ENCODE measurements at regions of chr3 and their contacts with region 1.

Region 1: DNA sequence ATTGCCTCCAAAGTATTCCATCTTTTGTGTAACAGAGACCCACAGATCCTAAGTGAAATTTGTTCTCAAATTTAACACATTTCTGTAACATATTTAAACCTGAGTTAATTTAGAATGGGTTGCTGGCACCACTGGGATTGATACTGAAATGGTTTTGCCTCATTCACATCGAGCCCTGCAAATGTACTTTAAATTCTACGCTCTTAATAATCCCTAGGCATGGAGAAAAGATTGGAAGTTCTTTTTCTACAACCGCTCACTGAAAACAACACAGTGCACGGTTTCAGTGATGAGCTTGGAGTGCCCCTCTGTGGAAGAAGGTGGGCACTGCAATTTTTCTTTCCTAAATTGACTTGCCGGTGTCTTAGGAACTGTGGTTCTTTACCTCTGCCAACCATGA is 109.9 kb upstream of the ATP11B start:
- DNase-seq: peak; percentile 78
- H3K4me3 Mint-ChIP-seq: peak overlapping the region; percentile 46
- H3K27ac Mint-ChIP-seq: peak overlapping the region; percentile 21
- H3K4me1 Mint-ChIP-seq: peaks cover 10% of the 10 kb centered on the region
- H3K27me3 Mint-ChIP-seq: no peaks in the 10 kb centered on the region
- CTCF ChIP-seq: peak; percentile 94

Region 2: GRCh38 chr3:181210275-181210674 is 1473.2 kb before region 1 on chr3:
- CTCF ChIA-PET with region 1: interaction called, 8 read pairs
- POLR2A ChIA-PET with region 1: no interaction called
- intact Hi-C with region 1: loop called (anchors 2 kb)
- DNase-seq: peak; percentile 42
- H3K4me3 Mint-ChIP-seq: no peak overlapping the region
- H3K27ac Mint-ChIP-seq: no peak overlapping the region
- H3K4me1 Mint-ChIP-seq: no peaks in the 10 kb centered on the region
- H3K27me3 Mint-ChIP-seq: no peaks in the 10 kb centered on the region
- CTCF ChIP-seq: peak; percentile 55

Region 3: DNA sequence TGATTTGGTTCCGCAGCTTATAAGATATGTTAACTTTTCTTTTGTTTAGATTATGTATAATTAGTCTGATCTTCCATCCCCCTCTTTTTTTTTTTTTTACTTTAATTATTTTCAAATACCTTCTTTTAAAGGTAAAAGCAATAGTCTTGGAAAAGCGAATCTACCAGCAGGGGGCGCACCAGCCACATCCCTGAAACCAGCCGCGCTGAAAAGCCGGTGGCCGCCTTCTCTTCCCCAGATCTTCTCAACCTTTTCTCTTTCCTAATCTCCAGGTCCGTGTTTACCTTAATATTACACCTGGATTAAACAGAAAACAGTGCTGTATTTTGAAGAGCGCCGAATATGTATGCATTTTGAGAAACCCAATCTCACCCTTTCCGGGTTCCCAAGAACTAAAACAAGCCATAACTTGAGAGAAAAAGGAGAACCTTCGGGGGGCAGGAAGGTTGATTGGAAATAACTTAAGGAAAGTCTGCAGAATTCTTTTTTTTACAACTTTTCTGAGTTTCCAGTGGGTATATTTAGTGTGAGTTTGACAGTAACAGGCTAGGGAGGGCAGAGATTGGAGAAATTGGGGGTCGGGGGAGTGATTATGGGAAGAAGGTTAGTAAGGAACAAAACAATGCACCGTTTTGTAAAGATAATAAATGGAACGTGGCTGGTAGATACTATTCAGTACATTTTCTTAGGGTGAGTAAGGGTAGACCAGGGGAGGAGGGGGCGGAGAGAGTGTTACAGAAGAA is 973.7 kb before region 1 on chr3:
- CTCF ChIA-PET with region 1: interaction called, 17 read pairs
- POLR2A ChIA-PET with region 1: interaction called, 5 read pairs
- intact Hi-C with region 1: loop called (anchors 1 kb)
- DNase-seq: peak; percentile 75
- H3K4me3 Mint-ChIP-seq: peak overlapping the region; percentile 59
- H3K27ac Mint-ChIP-seq: no peak overlapping the region
- H3K4me1 Mint-ChIP-seq: peaks cover 8% of the 10 kb centered on the region
- H3K27me3 Mint-ChIP-seq: no peaks in the 10 kb centered on the region
- CTCF ChIP-seq: peak; percentile 59

Region 4: GRCh38 chr3:182258538-182259177 is 424.8 kb before region 1 on chr3:
- CTCF ChIA-PET with region 1: interaction called, 8 read pairs
- POLR2A ChIA-PET with region 1: no interaction called
- intact Hi-C with region 1: loop called (anchors 1 kb)
- DNase-seq: peak; percentile 55
- H3K4me3 Mint-ChIP-seq: no peak overlapping the region
- H3K27ac Mint-ChIP-seq: peak overlapping the region; percentile 62
- H3K4me1 Mint-ChIP-seq: peaks cover 5% of the 10 kb centered on the region
- H3K27me3 Mint-ChIP-seq: no peaks in the 10 kb centered on the region
- CTCF ChIP-seq: peak; percentile 78

Region 5: DNA sequence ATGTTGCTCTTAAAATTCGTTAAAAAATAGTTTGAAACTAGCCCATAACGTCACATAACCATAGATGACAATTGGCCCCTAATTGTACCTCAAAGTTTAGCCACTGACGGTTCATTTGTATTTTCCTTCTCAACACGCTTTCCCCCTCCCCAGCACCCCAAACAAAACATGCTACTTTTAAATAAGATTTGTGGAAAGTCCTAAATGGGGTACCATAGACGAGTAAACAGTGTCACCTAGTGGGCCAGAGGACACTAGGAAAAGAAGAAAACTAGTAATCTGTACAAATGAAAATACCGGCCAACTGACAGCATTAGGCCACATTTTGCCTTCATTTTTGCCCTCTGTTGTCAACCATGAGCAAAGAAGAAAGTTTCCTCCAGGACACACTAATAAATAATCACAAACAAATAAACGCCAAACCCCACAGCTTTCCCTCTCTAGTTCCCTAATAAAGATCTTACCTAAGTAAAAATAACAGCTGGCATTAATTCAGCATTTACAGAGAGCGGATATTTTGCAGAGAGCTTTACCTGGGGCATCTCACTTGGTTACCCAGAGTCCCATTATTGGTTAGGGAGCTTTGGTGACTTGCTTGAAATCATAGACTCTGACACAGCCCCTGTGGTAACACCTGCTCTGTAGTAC is 65.2 kb before region 1 on chr3:
- CTCF ChIA-PET with region 1: interaction called, 13 read pairs
- POLR2A ChIA-PET with region 1: no interaction called
- intact Hi-C with region 1: loop called (anchors 1 kb)
- DNase-seq: peak; percentile 47
- H3K4me3 Mint-ChIP-seq: no peak overlapping the region
- H3K27ac Mint-ChIP-seq: peak overlapping the region; percentile 15
- H3K4me1 Mint-ChIP-seq: peaks cover 30% of the 10 kb centered on the region
- H3K27me3 Mint-ChIP-seq: no peaks in the 10 kb centered on the region
- CTCF ChIP-seq: peak; percentile 51

Region 6: DNA sequence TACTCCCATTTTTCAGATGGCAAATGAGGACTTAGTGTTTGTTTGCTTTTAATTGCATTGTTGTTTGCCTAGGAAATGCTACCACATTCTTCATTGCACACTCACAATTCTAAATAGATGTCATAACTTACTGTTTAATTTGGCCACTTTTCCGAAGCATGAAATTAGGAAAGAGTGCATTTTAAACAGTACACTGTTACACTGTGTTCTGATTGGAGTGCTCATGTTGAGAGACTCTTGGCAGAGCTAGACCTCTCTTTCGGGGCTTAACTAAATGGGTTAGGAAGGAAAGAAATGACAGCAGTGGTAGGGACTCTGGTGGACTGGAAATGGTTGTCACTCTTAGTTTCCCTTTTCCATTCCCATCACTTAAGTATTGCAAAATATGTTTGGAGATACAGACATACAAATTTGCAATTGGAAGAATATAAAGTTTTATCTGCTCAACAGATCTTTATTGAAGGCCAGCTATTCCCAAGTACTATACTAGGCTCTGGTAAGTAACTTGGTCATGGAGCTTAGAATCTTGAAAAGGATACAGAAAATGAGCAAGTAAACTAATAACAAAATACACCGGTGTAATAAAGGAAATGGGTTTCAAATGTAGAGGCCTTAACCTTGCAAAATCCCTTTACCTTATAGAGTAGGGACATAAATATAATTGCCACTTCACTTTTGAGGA is 206.6 kb after region 1 on chr3:
- CTCF ChIA-PET with region 1: no interaction called
- POLR2A ChIA-PET with region 1: no interaction called
- intact Hi-C with region 1: no loop called
- DNase-seq: peak; percentile 56
- H3K4me3 Mint-ChIP-seq: no peak overlapping the region
- H3K27ac Mint-ChIP-seq: no peak overlapping the region
- H3K4me1 Mint-ChIP-seq: no peaks in the 10 kb centered on the region
- H3K27me3 Mint-ChIP-seq: no peaks in the 10 kb centered on the region
- CTCF ChIP-seq: no peak

Region 7: DNA sequence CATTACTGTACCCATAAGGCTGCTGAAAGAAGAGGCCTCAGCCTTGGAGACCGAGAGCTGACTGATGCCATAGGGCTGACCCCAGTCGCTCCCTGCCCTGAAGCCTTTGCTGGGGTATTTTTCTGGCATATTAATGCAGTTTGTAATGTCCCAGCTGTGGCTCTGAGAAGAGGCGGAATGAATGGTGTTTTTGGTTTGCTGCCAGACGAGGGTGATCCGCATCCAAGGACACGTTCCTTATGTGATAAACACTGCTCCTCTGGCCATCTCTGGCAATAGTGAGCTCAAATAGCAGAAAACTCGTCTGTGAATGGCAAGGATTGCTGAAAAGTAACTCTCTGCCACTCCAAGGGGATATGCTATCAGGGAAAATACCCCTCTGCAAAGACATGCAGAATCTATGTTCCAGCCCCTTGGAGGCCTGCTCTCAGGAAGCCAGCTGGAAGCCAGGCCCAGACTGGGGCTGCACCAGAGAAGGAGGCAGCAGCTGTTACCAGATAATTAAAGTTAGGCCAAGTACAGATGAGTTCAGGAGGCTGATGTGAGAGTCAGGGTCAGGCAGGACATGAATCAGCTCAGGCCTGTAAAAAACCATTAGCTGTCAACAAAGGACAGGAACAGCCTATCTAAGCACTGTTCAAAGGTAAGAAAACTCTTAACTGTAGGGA is 900.9 kb after region 1 on chr3:
- CTCF ChIA-PET with region 1: no interaction called
- POLR2A ChIA-PET with region 1: no interaction called
- intact Hi-C with region 1: no loop called
- DNase-seq: no peak
- H3K4me3 Mint-ChIP-seq: no peak overlapping the region
- H3K27ac Mint-ChIP-seq: no peak overlapping the region
- H3K4me1 Mint-ChIP-seq: no peaks in the 10 kb centered on the region
- H3K27me3 Mint-ChIP-seq: peaks cover 26% of the 10 kb centered on the region
- CTCF ChIP-seq: no peak